Endothelial cell of umbilical vein (primary cell): ENCODE measurements at regions of chr1 and their contacts with region 1.

Region 1: GRCh38 chr1:182789138-182790076 is at the start of gene NPL:
- DNase-seq: peak; percentile 71
- H3K4me3 ChIP-seq: peak within 1 kb of the TSS; percentile 41 to 63 (median 54)
- H3K27ac ChIP-seq: no peak within 1 kb of the TSS
- H3K4me1 ChIP-seq: peaks cover 8% of the 10 kb centered on the region
- H3K27me3 ChIP-seq: peaks cover 34 to 59% of the 10 kb centered on the region in 2 experiments
- CTCF ChIP-seq: no peak
- POLR2A ChIP-seq: peak; percentile 42
- total RNA-seq, gene NPL: 0.75 and 1.3 TPM in 2 replicates

Region 2: DNA sequence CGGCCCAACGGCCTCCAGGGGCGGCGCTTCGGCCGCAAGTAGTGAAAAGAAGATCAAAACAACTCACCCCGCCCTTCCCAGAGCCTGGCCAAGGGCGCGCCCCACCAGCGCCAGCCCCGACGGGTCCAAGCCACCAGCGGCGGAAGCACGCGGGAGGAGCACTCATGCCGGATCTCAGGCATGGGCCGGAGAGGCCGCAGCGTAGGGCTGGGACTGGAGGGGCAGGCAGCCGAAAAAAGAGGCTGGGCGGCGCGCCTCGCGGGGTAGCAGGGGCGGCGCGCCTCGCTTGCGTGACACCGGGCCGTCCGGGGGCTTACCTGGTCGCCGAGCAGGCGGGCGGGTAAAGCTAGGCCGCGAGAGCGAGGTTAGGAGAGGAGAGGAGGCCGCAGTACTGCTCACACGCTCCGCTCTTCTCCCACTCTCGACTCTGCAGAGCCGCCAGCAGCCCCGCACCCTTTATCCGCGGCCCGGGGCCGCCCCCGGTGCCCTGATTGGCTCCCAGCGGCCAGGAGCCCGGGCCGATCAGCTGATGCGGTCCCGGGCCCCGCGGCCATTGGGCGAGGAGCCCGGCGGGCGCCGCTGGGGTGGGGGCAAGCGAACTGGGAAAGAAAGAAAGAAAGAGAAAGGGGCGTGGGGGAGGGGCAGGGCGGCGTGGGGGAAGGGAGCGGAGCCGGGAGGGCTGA is 397.9 kb before region 1 on chr1 and contains the start of gene GLUL:
- CTCF ChIA-PET with region 1: no interaction called
- POLR2A ChIA-PET with region 1: no interaction called
- dilution Hi-C with region 1: no loop called
- intact Hi-C with region 1: loop called (anchors 5 kb)
- DNase-seq: peak; percentile 94
- H3K4me3 ChIP-seq: peak within 1 kb of the TSS; percentile 70 to 90 (median 76)
- H3K27ac ChIP-seq: peak within 1 kb of the TSS; percentile 81
- H3K4me1 ChIP-seq: peaks cover 4% of the 10 kb centered on the region
- H3K27me3 ChIP-seq: no peaks in the 10 kb centered on the region
- CTCF ChIP-seq: peak in 1 of 2 donors; percentile 33
- POLR2A ChIP-seq: peak; percentile 99
- total RNA-seq, gene GLUL: 181 and 187 TPM in 2 replicates

Region 3: GRCh38 chr1:182614796-182615454 is 174.5 kb before region 1 on chr1:
- CTCF ChIA-PET with region 1: interaction called, 891 read pairs
- POLR2A ChIA-PET with region 1: no interaction called
- dilution Hi-C with region 1: no loop called
- intact Hi-C with region 1: loop called (anchors 5 kb)
- DNase-seq: peak; percentile 55
- H3K4me3 ChIP-seq: peak overlapping the region; percentile 38 to 46 (median 39)
- H3K27ac ChIP-seq: no peak overlapping the region
- H3K4me1 ChIP-seq: peaks cover 11% of the 10 kb centered on the region
- H3K27me3 ChIP-seq: peaks cover 56 to 63% of the 10 kb centered on the region in 2 experiments
- CTCF ChIP-seq: no peak
- POLR2A ChIP-seq: no peak

Region 4: DNA sequence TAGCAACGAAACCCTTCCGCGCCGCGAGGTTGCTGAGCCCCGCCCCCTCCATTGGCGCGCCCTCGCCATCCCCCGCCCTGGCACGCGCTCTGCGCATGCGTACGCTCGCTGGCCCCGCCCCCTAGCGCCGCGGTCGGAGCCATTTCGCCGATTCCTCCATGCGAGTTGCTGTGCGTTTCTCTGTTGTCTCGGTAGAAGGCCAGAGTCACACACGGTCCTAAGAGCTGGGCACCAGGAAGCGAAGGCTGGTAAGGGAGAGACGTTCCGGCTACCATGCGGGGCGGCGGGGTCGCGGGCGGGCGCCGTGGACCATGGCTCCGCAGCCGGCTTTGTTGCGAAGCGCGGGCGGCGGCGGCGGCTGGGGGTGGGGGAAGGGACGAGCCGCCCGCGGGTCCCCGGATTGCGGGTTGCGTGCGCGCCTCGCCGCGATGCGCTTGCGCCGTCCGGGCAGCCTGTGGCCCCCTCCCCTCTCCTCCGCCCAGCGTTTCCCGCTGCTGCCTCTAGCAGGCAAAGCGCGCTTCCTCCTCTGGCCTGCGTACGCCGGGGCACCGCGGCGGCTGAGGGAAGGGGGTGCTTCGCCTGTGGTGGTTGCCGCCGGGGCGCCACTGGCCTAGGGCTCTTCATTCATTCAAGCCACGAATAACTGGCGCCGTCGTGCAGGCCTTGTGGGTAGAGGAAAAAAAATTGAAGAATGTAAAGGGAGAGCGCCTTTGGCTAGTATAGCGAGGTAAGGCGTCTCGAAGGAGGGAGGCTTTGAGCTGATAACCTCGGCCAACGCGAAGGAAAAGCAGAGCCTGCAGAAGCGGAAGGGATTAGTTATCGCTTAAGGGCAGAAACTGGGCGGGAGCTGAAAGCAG is 50.0 kb after region 1 on chr1 and contains the start of gene DHX9:
- CTCF ChIA-PET with region 1: interaction called, 4 read pairs
- POLR2A ChIA-PET with region 1: no interaction called
- dilution Hi-C with region 1: no loop called
- intact Hi-C with region 1: loop called (anchors 1 kb)
- DNase-seq: peak; percentile 92
- H3K4me3 ChIP-seq: peak within 1 kb of the TSS; percentile 68 to 96 (median 88)
- H3K27ac ChIP-seq: peak within 1 kb of the TSS; percentile 78
- H3K4me1 ChIP-seq: peaks cover 23% of the 10 kb centered on the region
- H3K27me3 ChIP-seq: no peaks in the 10 kb centered on the region
- CTCF ChIP-seq: peak in 1 of 2 donors; percentile 23
- POLR2A ChIP-seq: peak; percentile 99
- total RNA-seq, gene DHX9: 219 and 220 TPM in 2 replicates

Region 5: DNA sequence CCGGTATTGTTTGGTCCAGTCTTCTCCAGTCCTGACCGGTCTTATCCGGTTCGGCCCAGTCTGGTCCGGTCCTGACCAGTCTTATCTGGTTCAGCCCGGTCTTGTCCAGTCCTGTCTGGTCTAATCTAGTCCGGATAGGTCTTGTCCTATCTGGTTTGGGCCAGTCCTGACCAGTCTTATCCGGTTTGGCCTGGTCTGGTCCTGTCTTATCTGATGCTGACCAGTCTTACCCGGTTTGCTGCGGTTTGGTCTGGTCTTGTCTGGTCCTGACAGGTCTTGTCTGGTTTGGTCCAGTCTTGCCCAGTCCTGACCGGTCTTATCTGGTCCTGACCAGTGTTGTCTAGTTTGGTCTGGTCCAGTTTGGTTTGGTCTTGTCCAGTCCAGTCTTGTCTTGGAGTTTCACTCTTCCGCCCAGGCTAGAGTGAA is 79.8 kb after region 1 on chr1:
- CTCF ChIA-PET with region 1: no interaction called
- POLR2A ChIA-PET with region 1: no interaction called
- dilution Hi-C with region 1: no loop called
- intact Hi-C with region 1: no loop called
- DNase-seq: no peak
- H3K4me3 ChIP-seq: no peak overlapping the region
- H3K27ac ChIP-seq: no peak overlapping the region
- H3K4me1 ChIP-seq: no peaks in the 10 kb centered on the region
- H3K27me3 ChIP-seq: no peaks in the 10 kb centered on the region
- CTCF ChIP-seq: no peak
- POLR2A ChIP-seq: peak; percentile 14